ENCODE measurements at regions of chr7 and their contacts with region 1.

Region 1: DNA sequence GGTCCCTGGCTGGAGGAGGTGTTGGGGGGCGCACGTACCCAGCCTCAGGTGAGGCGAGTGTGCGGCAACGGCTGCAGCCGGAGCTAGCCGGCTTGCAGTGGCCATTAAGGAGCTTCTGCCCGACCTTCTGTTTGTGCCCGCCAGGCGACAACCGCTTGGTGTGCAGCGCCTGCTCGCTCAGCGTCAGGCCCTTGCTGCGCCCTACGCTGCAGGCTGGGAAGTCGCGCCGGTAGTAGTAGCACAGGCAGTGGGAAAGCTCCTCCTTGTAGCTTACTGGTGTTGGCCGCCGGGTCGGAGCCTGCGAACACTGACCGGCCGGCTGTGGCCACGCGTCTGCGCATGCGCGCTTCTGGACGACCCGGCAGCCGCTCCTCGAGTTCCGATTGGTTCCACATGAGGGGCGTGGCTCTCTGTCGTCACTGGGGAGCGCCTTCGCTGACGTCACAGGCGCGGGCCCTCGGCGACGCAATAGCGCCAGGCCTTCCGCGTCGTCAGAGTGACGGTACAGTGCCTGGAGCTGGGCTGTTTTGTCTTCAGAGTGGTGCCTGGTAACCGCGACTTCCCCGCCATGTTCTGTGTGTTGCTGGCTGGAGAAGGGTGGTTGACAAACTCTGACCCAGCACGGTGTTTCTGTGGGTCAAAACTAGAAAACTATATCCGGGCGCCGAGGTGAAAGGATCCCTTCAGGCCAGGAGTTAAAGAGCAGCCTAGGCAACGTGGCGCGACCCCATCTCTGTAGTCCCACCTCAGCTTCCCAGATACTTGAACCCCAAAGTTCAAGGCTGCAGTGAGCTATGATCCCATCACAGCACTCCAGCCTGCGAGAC is 76.3 kb upstream of the TMEM248 start:
- DNase-seq: peak; percentile 97 to 100 (median 100)
- H3K4me3 ChIP-seq: peak overlapping the region; percentile 78 to 92
- H3K4me3 Mint-ChIP-seq: peak overlapping the region; percentile 90 to 100 (median 96)
- H3K27ac ChIP-seq: peak overlapping the region; percentile 95
- H3K27ac Mint-ChIP-seq: peak overlapping the region; percentile 98 to 100 (median 100)
- H3K4me1 ChIP-seq: peaks cover 20% of the 10 kb centered on the region
- H3K4me1 Mint-ChIP-seq: peaks cover 8 to 30% (median 19%) of the 10 kb centered on the region in 4 donors
- H3K27me3 ChIP-seq: no peaks in the 10 kb centered on the region
- H3K27me3 Mint-ChIP-seq: peaks cover 3 to 4% of the 10 kb centered on the region in 2 donors

Region 2: DNA sequence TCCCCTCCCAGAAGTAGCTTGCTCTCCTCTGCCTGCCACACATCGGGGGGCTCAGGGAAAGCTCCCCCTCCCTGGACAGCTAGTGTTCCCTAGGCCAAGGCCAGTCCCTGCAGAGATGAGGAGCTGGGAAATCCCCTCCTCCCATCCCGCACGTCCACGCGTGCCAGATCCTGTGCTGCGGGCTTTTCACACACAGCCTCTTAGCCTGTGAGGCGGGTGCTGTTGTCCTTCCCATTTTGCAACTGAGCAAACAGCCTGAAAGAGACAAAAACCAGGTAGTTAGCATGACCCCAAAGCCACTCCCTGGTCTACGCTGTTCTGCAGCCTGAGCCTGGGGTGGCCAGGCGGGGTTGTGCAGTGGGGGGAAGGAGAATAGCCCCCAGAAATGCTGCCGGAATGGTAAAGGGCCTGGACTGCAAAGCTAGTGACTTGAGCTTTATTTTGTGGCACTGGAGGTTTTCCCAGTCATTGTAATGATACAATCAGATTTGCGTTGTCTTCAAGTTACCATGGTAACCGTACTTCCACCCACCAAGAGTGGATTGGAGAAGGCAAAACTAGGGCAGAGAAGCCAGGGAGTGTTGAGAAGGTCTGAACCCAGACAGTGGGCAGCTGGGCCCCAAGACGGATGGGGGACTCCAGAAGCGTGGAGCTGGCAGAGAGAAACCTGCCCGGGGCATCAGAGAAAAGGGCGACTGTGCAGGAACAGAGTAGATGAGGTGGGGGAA is 314.7 kb before region 1 on chr7:
- CTCF ChIA-PET with region 1: no interaction called
- POLR2A ChIA-PET with region 1: no interaction called
- intact Hi-C with region 1: no loop called
- DNase-seq: no peak
- H3K4me3 ChIP-seq: no peak overlapping the region
- H3K4me3 Mint-ChIP-seq: no peak overlapping the region
- H3K27ac ChIP-seq: no peak overlapping the region
- H3K27ac Mint-ChIP-seq: peak overlapping the region in 4 of 7 donors; percentile 40 to 71 (median 54)
- H3K4me1 ChIP-seq: no peaks in the 10 kb centered on the region
- H3K4me1 Mint-ChIP-seq: peaks cover 0 to 4% (median 2%) of the 10 kb centered on the region in 4 donors
- H3K27me3 ChIP-seq: no peaks in the 10 kb centered on the region
- H3K27me3 Mint-ChIP-seq: no peaks in the 10 kb centered on the region

Region 3: DNA sequence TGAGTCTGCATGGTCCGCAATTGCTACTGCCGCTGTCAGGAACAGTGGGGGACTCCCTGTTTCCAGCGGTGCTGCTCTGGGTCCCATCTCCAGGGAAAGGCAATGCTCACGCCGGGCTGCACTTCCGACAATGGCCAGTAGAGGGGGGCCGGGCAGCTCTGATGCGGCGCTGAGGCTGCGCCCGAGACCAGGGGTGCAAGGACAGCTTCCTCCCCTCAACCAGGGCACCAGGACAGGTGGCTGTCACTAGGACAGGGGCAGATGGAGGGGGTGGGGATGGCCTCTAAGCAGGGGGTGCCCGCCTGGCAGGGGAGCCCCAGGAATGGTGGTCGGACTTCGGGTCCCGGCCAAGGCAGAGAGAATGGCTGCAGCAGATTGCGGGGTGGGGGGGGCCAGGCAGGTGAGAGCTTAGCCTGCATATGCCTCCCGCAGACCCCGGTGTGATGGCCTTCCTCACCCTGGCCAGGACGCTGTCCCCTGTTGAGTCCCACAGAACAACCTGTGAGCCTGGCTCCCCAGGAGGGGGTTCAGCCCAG is 287.1 kb before region 1 on chr7:
- CTCF ChIA-PET with region 1: interaction called, 4 read pairs
- POLR2A ChIA-PET with region 1: interaction called, 7 read pairs
- intact Hi-C with region 1: loop called (anchors 1 kb)
- DNase-seq: peak; percentile 60 to 73 (median 64)
- H3K4me3 ChIP-seq: no peak overlapping the region
- H3K4me3 Mint-ChIP-seq: no peak overlapping the region
- H3K27ac ChIP-seq: no peak overlapping the region
- H3K27ac Mint-ChIP-seq: peak overlapping the region in 3 of 7 donors; percentile 30 to 78 (median 57)
- H3K4me1 ChIP-seq: no peaks in the 10 kb centered on the region
- H3K4me1 Mint-ChIP-seq: peaks cover 5 to 18% (median 7%) of the 10 kb centered on the region in 4 donors
- H3K27me3 ChIP-seq: no peaks in the 10 kb centered on the region
- H3K27me3 Mint-ChIP-seq: no peaks in the 10 kb centered on the region

Region 4: GRCh38 chr7:66654123-66654732 is 190.5 kb before region 1 on chr7:
- CTCF ChIA-PET with region 1: no interaction called
- POLR2A ChIA-PET with region 1: interaction called, 15 read pairs
- intact Hi-C with region 1: loop called (anchors 10 kb)
- DNase-seq: peak; percentile 97 to 99 (median 98)
- H3K4me3 ChIP-seq: peak overlapping the region; percentile 90 to 91
- H3K4me3 Mint-ChIP-seq: peak overlapping the region; percentile 96 to 99 (median 97)
- H3K27ac ChIP-seq: peak overlapping the region; percentile 95
- H3K27ac Mint-ChIP-seq: peak overlapping the region; percentile 99
- H3K4me1 ChIP-seq: peaks cover 17% of the 10 kb centered on the region
- H3K4me1 Mint-ChIP-seq: peaks cover 10 to 33% (median 24%) of the 10 kb centered on the region in 4 donors
- H3K27me3 ChIP-seq: no peaks in the 10 kb centered on the region
- H3K27me3 Mint-ChIP-seq: no peaks in the 10 kb centered on the region

Region 5: GRCh38 chr7:66758950-66759628 is 85.7 kb before region 1 on chr7:
- CTCF ChIA-PET with region 1: no interaction called
- POLR2A ChIA-PET with region 1: no interaction called
- intact Hi-C with region 1: no loop called
- DNase-seq: no peak
- H3K4me3 ChIP-seq: no peak overlapping the region
- H3K4me3 Mint-ChIP-seq: peak overlapping the region in 1 of 8 donors; percentile 6
- H3K27ac ChIP-seq: no peak overlapping the region
- H3K27ac Mint-ChIP-seq: peak overlapping the region; percentile 18 to 85 (median 62)
- H3K4me1 ChIP-seq: peaks cover 11% of the 10 kb centered on the region
- H3K4me1 Mint-ChIP-seq: peaks cover 15 to 37% (median 31%) of the 10 kb centered on the region in 4 donors
- H3K27me3 ChIP-seq: no peaks in the 10 kb centered on the region
- H3K27me3 Mint-ChIP-seq: no peaks in the 10 kb centered on the region

Region 6: DNA sequence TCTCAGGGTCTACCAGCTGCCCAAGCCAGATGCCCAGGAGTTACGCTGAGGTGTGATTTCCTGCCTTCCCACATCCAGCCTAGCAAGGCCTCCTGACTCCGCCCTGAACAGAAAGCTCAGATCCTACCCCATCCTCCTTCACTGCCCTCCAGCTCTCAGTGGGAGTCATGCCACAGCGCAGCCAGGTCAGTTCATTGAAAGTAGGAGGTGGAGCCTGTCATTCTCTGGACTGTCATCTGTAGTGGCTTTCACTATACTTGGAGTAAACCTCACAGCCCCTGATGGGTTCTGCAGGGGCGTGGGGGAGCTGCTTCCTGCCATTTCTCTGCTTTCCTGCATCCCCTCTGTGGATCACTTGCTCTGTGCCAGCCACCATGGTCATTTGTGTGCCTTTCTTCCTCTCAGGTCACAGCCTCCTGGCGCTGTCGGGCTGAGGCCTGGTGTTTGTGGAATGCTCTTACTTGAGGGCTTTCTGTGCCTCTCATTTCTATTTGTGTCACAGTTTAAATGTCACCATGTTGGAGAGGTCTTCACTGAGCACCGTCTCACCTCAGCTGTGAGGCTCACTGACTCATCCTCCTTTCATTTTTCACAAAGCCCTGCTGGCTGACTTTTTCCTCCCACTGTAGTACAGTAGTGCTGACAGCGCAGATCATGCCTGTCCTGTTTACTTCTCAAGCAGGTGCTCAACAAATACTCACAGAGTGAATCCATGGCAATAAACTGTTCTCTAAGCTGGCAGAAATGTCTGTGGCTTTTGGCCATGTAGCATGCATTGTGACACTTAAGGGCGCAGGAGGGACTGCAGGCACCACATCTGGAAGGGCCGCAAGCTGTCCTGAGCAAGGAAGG is 15.3 kb after region 1 on chr7:
- CTCF ChIA-PET with region 1: interaction called, 3 read pairs
- POLR2A ChIA-PET with region 1: interaction called, 41 read pairs
- intact Hi-C with region 1: no loop called
- DNase-seq: peak in 3 of 5 donors; percentile 8 to 37 (median 33)
- H3K4me3 ChIP-seq: no peak overlapping the region
- H3K4me3 Mint-ChIP-seq: peak overlapping the region; percentile 57 to 84 (median 66)
- H3K27ac ChIP-seq: peak overlapping the region; percentile 32
- H3K27ac Mint-ChIP-seq: peak overlapping the region; percentile 44 to 97 (median 95)
- H3K4me1 ChIP-seq: no peaks in the 10 kb centered on the region
- H3K4me1 Mint-ChIP-seq: peaks cover 9 to 12% (median 11%) of the 10 kb centered on the region in 4 donors
- H3K27me3 ChIP-seq: no peaks in the 10 kb centered on the region
- H3K27me3 Mint-ChIP-seq: no peaks in the 10 kb centered on the region

Region 7: GRCh38 chr7:67302113-67303039 is 457.6 kb after region 1 on chr7:
- CTCF ChIA-PET with region 1: no interaction called
- POLR2A ChIA-PET with region 1: interaction called, 3 read pairs
- intact Hi-C with region 1: loop called (anchors 5 kb)
- DNase-seq: peak; percentile 97 to 99 (median 97)
- H3K4me3 ChIP-seq: peak overlapping the region; percentile 84 to 97
- H3K4me3 Mint-ChIP-seq: peak overlapping the region; percentile 92 to 98 (median 94)
- H3K27ac ChIP-seq: peak overlapping the region; percentile 86
- H3K27ac Mint-ChIP-seq: peak overlapping the region; percentile 97 to 98 (median 98)
- H3K4me1 ChIP-seq: peaks cover 8% of the 10 kb centered on the region
- H3K4me1 Mint-ChIP-seq: peaks cover 16 to 29% (median 20%) of the 10 kb centered on the region in 4 donors
- H3K27me3 ChIP-seq: no peaks in the 10 kb centered on the region
- H3K27me3 Mint-ChIP-seq: no peaks in the 10 kb centered on the region